ENCODE measurements at regions of chr1 and their contacts with region 1.

Region 1: DNA sequence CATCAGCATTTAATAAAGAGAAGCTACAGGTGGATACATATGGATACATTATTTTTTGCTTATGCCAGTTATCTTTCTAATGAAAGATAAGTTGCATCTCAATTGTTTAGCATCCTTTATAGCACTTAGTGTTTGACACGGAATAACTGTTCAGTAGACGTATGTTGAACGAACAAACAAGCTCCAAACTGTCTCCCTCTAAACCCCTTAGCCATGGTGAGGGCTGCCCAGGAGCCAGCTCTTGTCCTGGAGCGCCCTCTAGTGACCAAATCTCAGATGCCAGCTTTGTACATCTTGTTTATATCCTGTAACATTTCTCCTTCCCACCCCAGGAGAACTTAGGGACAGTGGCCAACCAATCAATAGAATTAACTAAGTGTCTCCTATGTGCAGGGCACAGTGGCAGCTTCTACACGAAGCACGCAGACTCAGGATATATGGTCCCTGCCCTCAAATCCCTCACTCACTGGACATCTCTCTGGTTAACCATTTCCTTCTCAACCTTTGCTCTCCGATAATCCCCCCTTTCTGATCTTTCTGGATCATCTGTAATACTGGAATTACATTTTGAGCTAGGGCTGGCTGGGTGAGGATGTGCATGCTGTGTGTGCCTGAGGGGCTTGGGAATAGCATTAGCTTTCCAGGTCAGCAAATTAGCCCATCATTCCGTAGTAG is 22.9 kb downstream of the KCNA10 start:
- DNase-seq: peak; percentile 88
- ATAC-seq: peak; percentile 87
- H3K4me3 Mint-ChIP-seq: no peak overlapping the region
- H3K27ac Mint-ChIP-seq: no peak overlapping the region
- H3K4me1 Mint-ChIP-seq: peaks cover 14% of the 10 kb centered on the region
- H3K27me3 Mint-ChIP-seq: no peaks in the 10 kb centered on the region

Region 2: DNA sequence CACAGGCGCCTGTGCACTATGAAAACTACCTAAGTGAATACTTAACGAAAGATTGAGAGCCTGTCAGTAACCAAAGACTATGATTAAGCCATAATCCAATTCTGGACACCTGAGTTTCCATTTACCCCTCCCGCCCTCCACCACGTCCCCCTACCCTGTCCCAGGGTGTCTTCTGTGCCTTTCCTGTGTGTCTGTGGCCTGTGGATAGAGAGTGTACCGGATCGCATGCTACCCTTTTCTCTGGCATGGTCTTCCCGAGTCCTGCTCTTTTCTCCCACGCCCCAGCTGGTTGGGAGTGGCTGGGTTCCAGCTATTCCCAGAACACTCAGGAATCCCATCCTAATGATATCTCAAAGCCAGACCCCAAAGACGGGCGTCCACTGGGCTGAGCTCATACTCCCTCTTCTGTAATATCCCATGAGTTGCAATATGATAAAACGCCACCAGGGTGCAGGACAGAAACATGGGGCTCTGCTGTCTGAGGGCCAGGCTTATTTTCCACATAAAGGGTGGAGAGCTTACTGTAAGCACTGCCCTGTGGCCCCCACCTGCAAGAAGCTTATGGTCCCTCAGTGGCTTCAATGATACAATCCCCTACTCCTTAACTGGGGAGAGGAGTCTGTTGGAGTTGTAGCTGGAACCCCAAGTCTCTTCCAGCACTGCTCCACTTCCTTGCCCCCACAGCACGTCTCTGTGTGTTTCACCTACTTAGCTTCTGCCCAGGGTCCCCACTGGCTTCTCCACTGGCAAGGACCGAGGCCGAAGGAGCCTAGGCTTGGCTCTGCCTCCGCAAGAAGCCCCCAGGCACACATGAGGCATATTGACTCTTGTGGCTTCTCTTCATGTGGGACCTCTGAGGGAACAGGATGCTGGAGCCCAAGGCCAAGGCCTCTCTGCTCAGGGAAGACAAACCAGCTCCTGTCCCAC is 408.0 kb before region 1 on chr1:
- CTCF ChIA-PET with region 1: interaction called, 10 read pairs
- POLR2A ChIA-PET with region 1: no interaction called
- DNase-seq: peak; percentile 68
- ATAC-seq: peak; percentile 78
- H3K4me3 Mint-ChIP-seq: no peak overlapping the region
- H3K27ac Mint-ChIP-seq: no peak overlapping the region
- H3K4me1 Mint-ChIP-seq: peaks cover 11% of the 10 kb centered on the region
- H3K27me3 Mint-ChIP-seq: peaks cover 61% of the 10 kb centered on the region

Region 3: GRCh38 chr1:110209715-110210603 is 286.1 kb before region 1 on chr1 and contains the start of gene KCNC4:
- CTCF ChIA-PET with region 1: interaction called, 86 read pairs
- POLR2A ChIA-PET with region 1: no interaction called
- DNase-seq: peak; percentile 96
- ATAC-seq: peak; percentile 92
- H3K4me3 Mint-ChIP-seq: peak within 1 kb of the TSS; percentile 81
- H3K27ac Mint-ChIP-seq: peak within 1 kb of the TSS; percentile 95
- H3K4me1 Mint-ChIP-seq: peaks cover 42% of the 10 kb centered on the region
- H3K27me3 Mint-ChIP-seq: peaks cover 8% of the 10 kb centered on the region
- total RNA-seq, gene KCNC4: 7.5 to 8.3 TPM

Region 4: GRCh38 chr1:110390692-110391245 is 105.3 kb before region 1 on chr1 and contains the start of gene SLC16A4:
- CTCF ChIA-PET with region 1: no interaction called
- POLR2A ChIA-PET with region 1: no interaction called
- DNase-seq: no peak
- ATAC-seq: no peak
- H3K4me3 Mint-ChIP-seq: no peak within 1 kb of the TSS
- H3K27ac Mint-ChIP-seq: no peak within 1 kb of the TSS
- H3K4me1 Mint-ChIP-seq: peaks cover 5% of the 10 kb centered on the region
- H3K27me3 Mint-ChIP-seq: no peaks in the 10 kb centered on the region
- total RNA-seq, gene SLC16A4: 0.23 to 0.26 TPM

Region 5: GRCh38 chr1:110412576-110412975 is 83.5 kb before region 1 on chr1:
- CTCF ChIA-PET with region 1: interaction called, 55 read pairs
- POLR2A ChIA-PET with region 1: no interaction called
- DNase-seq: peak; percentile 70
- ATAC-seq: peak; percentile 55
- H3K4me3 Mint-ChIP-seq: no peak overlapping the region
- H3K27ac Mint-ChIP-seq: no peak overlapping the region
- H3K4me1 Mint-ChIP-seq: peaks cover 16% of the 10 kb centered on the region
- H3K27me3 Mint-ChIP-seq: no peaks in the 10 kb centered on the region

Region 6: GRCh38 chr1:110466646-110467280 is 29.3 kb before region 1 on chr1:
- CTCF ChIA-PET with region 1: interaction called, 17 read pairs
- POLR2A ChIA-PET with region 1: no interaction called
- DNase-seq: no peak
- ATAC-seq: no peak
- H3K4me3 Mint-ChIP-seq: no peak overlapping the region
- H3K27ac Mint-ChIP-seq: no peak overlapping the region
- H3K4me1 Mint-ChIP-seq: no peaks in the 10 kb centered on the region
- H3K27me3 Mint-ChIP-seq: peaks cover 9% of the 10 kb centered on the region

Region 7: GRCh38 chr1:110554871-110555801 is 59.1 kb after region 1 on chr1:
- CTCF ChIA-PET with region 1: interaction called, 10 read pairs
- POLR2A ChIA-PET with region 1: no interaction called
- DNase-seq: peak; percentile 62
- ATAC-seq: peak; percentile 84
- H3K4me3 Mint-ChIP-seq: no peak overlapping the region
- H3K27ac Mint-ChIP-seq: no peak overlapping the region
- H3K4me1 Mint-ChIP-seq: peaks cover 2% of the 10 kb centered on the region
- H3K27me3 Mint-ChIP-seq: peaks cover 51% of the 10 kb centered on the region

Region 8: DNA sequence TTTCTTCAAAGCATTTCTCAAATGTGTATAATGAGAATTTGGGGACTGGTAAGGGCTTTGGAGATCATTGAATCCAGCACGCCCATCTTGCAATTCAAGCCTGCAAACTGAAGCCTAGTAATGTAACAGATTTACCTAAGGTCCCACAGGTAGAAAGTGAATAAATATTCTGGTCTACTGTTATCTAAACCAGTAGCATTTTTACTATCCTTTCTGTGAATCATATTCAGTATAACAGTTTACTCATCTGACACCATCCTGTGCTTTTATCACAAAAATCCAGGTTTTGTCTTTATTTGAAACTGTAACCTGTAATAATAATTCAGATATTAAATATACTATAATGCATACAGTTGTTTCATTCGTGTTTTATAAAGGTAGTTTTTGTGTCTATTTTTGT is 161.3 kb after region 1 on chr1:
- CTCF ChIA-PET with region 1: no interaction called
- POLR2A ChIA-PET with region 1: no interaction called
- DNase-seq: no peak
- ATAC-seq: no peak
- H3K4me3 Mint-ChIP-seq: no peak overlapping the region
- H3K27ac Mint-ChIP-seq: no peak overlapping the region
- H3K4me1 Mint-ChIP-seq: peaks cover 21% of the 10 kb centered on the region
- H3K27me3 Mint-ChIP-seq: no peaks in the 10 kb centered on the region

Region 9: DNA sequence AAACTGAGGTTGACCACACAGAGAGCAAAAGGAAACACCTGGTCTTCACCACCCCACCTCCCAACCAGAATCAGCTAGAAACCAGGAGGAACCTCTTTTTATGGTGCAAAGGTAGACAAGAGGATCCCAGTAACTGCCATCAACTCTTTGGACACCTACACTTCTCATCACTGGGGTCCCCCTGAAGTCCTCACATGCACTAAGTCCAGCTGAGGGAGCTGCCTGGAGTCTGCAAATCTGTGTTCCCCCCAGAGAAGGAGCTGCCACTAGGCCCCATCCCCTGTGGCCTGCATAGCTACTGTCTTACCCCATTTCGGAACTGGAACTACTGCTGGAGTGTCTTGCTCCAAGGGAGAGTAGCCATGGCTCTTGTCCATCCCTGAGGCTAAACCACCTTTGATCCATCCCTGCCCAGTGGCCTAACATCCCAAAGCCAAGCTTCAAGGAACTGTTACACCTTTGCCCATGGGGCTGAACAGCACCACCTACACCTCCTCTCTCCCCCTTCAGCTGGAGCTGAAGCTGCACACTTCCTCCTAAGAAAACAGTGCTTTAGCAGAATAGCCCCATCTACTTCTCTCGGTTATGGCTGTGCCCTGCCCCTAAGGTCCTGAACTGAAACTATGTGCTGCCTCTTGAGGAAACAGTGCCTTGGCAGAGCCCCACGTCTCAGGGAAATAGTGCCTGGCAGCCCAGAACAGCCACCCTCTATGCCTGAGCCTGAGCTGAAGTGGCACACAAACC is 291.4 kb after region 1 on chr1:
- CTCF ChIA-PET with region 1: interaction called, 12 read pairs
- POLR2A ChIA-PET with region 1: no interaction called
- DNase-seq: peak; percentile 87
- ATAC-seq: peak; percentile 81
- H3K4me3 Mint-ChIP-seq: peak overlapping the region; percentile 66
- H3K27ac Mint-ChIP-seq: peak overlapping the region; percentile 95
- H3K4me1 Mint-ChIP-seq: peaks cover 73% of the 10 kb centered on the region
- H3K27me3 Mint-ChIP-seq: no peaks in the 10 kb centered on the region